BJ (cell line): ENCODE measurements at regions of chr5 and their contacts with region 1.

Region 1: DNA sequence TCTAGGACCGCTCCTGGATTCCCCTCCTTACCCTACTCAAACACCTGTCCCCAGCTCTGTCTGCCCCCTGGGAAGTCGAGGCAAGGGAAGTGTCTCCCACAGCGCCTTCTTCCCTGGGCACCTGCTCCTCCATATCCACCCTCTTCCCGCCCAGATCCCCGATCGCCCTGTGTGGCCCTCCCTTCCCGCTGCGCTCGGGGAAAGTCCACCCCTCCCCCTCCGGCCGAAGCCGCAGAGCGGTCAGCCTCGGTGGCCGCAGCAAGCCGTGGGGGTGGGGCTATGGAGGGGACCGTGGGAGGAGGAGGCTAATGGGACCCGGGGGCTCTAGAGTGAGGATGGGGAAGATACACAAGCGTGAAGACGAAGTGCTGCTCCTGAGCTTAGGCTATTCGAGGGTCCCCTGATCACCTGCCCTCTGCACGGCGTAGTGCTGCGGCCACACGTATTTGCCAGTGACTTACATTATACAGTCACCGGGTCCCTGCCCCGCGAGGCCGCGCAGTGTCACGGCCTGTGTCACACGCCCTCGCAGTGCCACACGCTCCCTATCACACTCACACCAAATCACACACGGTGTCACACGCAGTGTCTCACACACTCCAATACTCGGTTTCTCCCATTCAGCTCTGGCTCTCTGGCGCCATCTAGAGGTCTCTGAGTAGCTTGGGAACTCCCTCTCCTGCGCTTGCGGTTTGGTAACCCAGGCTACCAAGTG is 658 bp upstream of the PCDH1 start:
- DNase-seq: peak; percentile 26
- H3K4me3 ChIP-seq: peak overlapping the region; percentile 14
- H3K27me3 ChIP-seq: peaks cover 63% of the 10 kb centered on the region
- CTCF ChIP-seq: peak; percentile 98

Region 2: GRCh38 chr5:141681695-141682641 is 196.9 kb before region 1 on chr5 and contains the start of gene ARAP3:
- CTCF ChIA-PET with region 1: interaction called, 18 read pairs
- POLR2A ChIA-PET with region 1: interaction called, 4 read pairs
- DNase-seq: peak; percentile 49
- H3K4me3 ChIP-seq: peak within 1 kb of the TSS; percentile 44
- H3K27me3 ChIP-seq: no peaks in the 10 kb centered on the region
- CTCF ChIP-seq: no peak
- polyA plus RNA-seq, gene ARAP3: 4.1 and 5.6 TPM in 2 replicates

Region 3: GRCh38 chr5:141757402-141757801 is 121.5 kb before region 1 on chr5:
- CTCF ChIA-PET with region 1: interaction called, 64 read pairs
- POLR2A ChIA-PET with region 1: interaction called, 3 read pairs
- DNase-seq: no peak
- H3K4me3 ChIP-seq: no peak overlapping the region
- H3K27me3 ChIP-seq: peaks cover 48% of the 10 kb centered on the region
- CTCF ChIP-seq: peak; percentile 51

Region 4: GRCh38 chr5:141821361-141821925 is 57.4 kb before region 1 on chr5:
- CTCF ChIA-PET with region 1: interaction called, 12 read pairs
- POLR2A ChIA-PET with region 1: no interaction called
- DNase-seq: peak; percentile 90
- H3K4me3 ChIP-seq: no peak overlapping the region
- H3K27me3 ChIP-seq: peaks cover 5% of the 10 kb centered on the region
- CTCF ChIP-seq: no peak

Region 5: DNA sequence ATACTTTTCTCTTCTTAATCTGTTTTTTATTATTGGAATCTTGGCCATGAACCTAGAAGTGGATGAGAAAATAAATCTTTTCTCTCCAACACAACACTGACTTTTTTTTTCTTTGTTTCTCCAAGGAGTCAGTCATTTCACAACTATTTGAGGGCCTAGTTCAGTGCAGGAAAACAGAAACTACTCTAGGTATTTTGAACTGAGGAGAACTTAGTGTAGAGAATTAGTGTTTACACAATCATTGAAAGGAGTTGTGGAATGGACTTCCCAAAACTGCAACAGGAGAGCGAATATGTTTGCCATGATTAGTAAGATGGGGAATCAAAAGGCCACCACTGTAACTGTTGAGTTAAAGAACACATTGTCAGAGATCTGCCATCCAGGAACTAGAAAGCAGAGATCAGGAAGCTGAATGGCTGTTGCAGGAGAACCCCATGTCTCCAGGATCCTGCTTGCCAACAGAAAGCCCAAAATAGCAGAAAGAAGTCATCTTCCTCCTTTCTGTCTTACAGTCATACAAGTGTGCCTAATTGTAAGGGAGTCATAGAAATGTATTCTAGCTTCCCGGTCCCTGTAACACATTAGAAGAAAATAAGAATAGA is 19.7 kb after region 1 on chr5:
- CTCF ChIA-PET with region 1: interaction called, 12 read pairs
- POLR2A ChIA-PET with region 1: no interaction called
- DNase-seq: no peak
- H3K4me3 ChIP-seq: no peak overlapping the region
- H3K27me3 ChIP-seq: peaks cover 7% of the 10 kb centered on the region
- CTCF ChIP-seq: no peak

Region 6: DNA sequence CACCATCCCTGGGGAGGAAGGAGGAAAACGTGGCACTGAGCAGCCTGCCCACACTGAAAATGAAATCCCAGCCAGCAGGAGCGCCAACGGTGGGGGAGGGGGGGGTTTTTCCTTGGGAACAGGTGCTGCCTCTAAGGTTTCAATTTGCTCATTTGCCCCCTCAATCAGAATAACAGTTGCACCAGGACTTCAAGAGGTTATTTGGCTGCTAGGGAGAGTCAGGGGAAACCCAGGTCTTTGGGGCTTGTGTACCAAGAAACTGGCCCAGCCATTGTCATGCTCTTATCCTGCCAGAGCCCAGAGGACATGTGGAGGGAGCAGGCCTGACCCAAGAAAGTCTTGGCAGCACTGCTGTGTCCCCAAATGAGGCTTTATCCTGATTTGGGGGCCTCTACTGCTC is 296.2 kb after region 1 on chr5:
- CTCF ChIA-PET with region 1: no interaction called
- POLR2A ChIA-PET with region 1: no interaction called
- DNase-seq: no peak
- H3K4me3 ChIP-seq: no peak overlapping the region
- H3K27me3 ChIP-seq: peaks cover 3% of the 10 kb centered on the region; the same call in 1 of the 2 replicates
- CTCF ChIP-seq: no peak

Region 7: GRCh38 chr5:142356716-142357473 is 478.0 kb after region 1 on chr5:
- CTCF ChIA-PET with region 1: no interaction called
- POLR2A ChIA-PET with region 1: no interaction called
- DNase-seq: peak; percentile 52
- H3K4me3 ChIP-seq: peak overlapping the region; percentile 61
- H3K27me3 ChIP-seq: no peaks in the 10 kb centered on the region
- CTCF ChIP-seq: no peak